GM12878 (cell line): ENCODE measurements at regions of chr10 and their contacts with region 1.

Region 1: DNA sequence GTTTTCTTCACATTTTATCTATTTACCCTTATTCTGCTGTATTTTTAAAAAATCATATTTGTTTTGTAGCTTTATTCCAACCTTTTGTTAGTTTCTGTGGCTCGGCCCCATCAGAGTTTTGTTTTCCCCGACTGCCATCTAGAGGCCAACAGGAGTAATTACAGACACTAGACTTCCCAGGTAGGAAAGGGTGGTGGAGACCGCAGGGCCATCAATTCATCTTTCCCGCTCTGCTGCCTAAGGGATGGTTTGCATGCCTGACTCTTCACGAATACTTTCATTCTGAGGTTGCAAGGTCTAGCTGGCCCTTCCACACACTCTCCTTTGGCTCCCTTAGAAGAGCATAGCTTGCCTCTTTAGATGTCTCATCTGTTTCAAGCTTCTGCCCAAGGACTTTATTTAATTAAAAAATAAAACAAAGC is 38.3 kb downstream of the LYZL2 start:
- DNase-seq: no peak
- ATAC-seq: peak; percentile 41
- H3K4me3 ChIP-seq: no peak overlapping the region
- H3K27ac ChIP-seq: no peak overlapping the region
- H3K4me1 ChIP-seq: peaks cover 16% of the 10 kb centered on the region
- H3K27me3 ChIP-seq: no peaks in the 10 kb centered on the region
- CTCF ChIP-seq: peak; percentile 66 to 78 (median 72)
- EP300 ChIP-seq: no peak
- POLR2A ChIP-seq: no peak
- RAD21 ChIP-seq: peak; percentile 95

Region 2: GRCh38 chr10:30348378-30348776 is 242.9 kb before region 1 on chr10:
- CTCF ChIA-PET with region 1: interaction called, 17 read pairs
- POLR2A ChIA-PET with region 1: interaction called, 3 read pairs
- RAD21 ChIA-PET with region 1: interaction called, 5 read pairs
- SMC1A ChIA-PET with region 1: interaction called, 5 read pairs
- in situ Hi-C with region 1: no loop called
- intact Hi-C with region 1: no loop called
- DNase-seq: peak; percentile 2
- ATAC-seq: peak; percentile 20
- H3K4me3 ChIP-seq: peak overlapping the region; percentile 89
- H3K27ac ChIP-seq: peak overlapping the region; percentile 92
- H3K4me1 ChIP-seq: peaks cover 3% of the 10 kb centered on the region; the same call in 1 of the 2 replicates
- H3K27me3 ChIP-seq: no peaks in the 10 kb centered on the region; a peak in 1 of 4 replicates
- CTCF ChIP-seq: no peak
- EP300 ChIP-seq: no peak
- POLR2A ChIP-seq: no peak
- RAD21 ChIP-seq: no peak

Region 3: GRCh38 chr10:30392564-30392990 is 198.7 kb before region 1 on chr10:
- CTCF ChIA-PET with region 1: interaction called, 221 read pairs
- POLR2A ChIA-PET with region 1: interaction called, 8 read pairs
- RAD21 ChIA-PET with region 1: interaction called, 59 read pairs
- SMC1A ChIA-PET with region 1: interaction called, 68 read pairs
- in situ Hi-C with region 1: loop called (anchors 5 kb)
- intact Hi-C with region 1: loop called (anchors 1 kb)
- DNase-seq: peak; percentile 31
- ATAC-seq: peak; percentile 100
- H3K4me3 ChIP-seq: no peak overlapping the region
- H3K27ac ChIP-seq: no peak overlapping the region
- H3K4me1 ChIP-seq: no peaks in the 10 kb centered on the region
- H3K27me3 ChIP-seq: no peaks in the 10 kb centered on the region
- CTCF ChIP-seq: peak; percentile 81 to 100 (median 97); a peak in 5 of 6 replicates
- EP300 ChIP-seq: no peak
- POLR2A ChIP-seq: no peak
- RAD21 ChIP-seq: peak; percentile 97

Region 4: DNA sequence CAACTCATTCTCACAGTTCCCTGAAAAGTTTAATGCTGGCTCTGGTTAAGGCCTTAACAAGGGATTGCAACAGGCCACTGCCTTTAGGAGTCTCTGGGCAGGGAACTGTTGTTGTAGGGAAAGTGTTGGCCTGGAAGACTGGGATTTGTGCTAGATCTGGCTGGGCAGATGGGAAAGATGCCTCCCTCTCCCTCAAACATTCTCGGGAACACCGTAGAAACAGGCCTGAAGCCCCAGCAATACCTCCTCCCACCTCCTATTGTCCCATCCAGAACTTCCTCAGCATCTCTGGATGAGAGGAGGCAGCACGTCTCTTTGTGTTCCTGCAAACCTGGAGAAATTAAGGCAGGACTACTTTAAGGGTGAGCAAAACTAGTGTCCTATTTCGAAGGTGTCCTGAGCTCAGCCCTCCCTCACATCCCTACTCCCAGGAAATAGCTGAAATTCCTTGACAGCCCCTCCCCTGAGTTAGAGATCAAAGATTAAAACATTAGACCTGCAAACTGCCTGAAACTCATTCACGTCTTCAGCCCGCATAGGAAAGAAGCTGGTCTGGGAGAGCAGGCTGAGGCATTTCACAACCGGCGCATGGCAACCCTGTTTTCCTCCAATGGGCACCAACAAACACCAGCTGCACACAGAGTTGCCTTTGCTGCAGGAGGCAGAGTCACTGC is 168.1 kb before region 1 on chr10:
- CTCF ChIA-PET with region 1: interaction called, 11 read pairs
- POLR2A ChIA-PET with region 1: no interaction called
- RAD21 ChIA-PET with region 1: interaction called, 3 read pairs
- SMC1A ChIA-PET with region 1: interaction called, 10 read pairs
- in situ Hi-C with region 1: no loop called
- intact Hi-C with region 1: no loop called
- DNase-seq: no peak
- ATAC-seq: no peak
- H3K4me3 ChIP-seq: no peak overlapping the region; the same call in 1 of the 2 replicates
- H3K27ac ChIP-seq: no peak overlapping the region; the same call in none of the 2 replicates
- H3K4me1 ChIP-seq: peaks cover 61% of the 10 kb centered on the region
- H3K27me3 ChIP-seq: no peaks in the 10 kb centered on the region
- CTCF ChIP-seq: no peak
- EP300 ChIP-seq: no peak
- POLR2A ChIP-seq: no peak
- RAD21 ChIP-seq: no peak

Region 5: GRCh38 chr10:30529373-30529998 is 61.8 kb before region 1 on chr10:
- CTCF ChIA-PET with region 1: interaction called, 49 read pairs
- POLR2A ChIA-PET with region 1: no interaction called
- RAD21 ChIA-PET with region 1: interaction called, 14 read pairs
- SMC1A ChIA-PET with region 1: interaction called, 15 read pairs
- in situ Hi-C with region 1: no loop called
- intact Hi-C with region 1: loop called (anchors 2 kb)
- DNase-seq: peak; percentile 77
- ATAC-seq: peak; percentile 87
- H3K4me3 ChIP-seq: peak overlapping the region; percentile 48
- H3K27ac ChIP-seq: peak overlapping the region; percentile 97
- H3K4me1 ChIP-seq: peaks cover 33% of the 10 kb centered on the region
- H3K27me3 ChIP-seq: no peaks in the 10 kb centered on the region
- CTCF ChIP-seq: no peak
- EP300 ChIP-seq: peak; percentile 97 to 99; a peak in 3 of 4 replicates
- POLR2A ChIP-seq: peak; percentile 88
- RAD21 ChIP-seq: 0 out of 2 replicates have a peak, but pooled peaks have one; percentile 11

Region 6: DNA sequence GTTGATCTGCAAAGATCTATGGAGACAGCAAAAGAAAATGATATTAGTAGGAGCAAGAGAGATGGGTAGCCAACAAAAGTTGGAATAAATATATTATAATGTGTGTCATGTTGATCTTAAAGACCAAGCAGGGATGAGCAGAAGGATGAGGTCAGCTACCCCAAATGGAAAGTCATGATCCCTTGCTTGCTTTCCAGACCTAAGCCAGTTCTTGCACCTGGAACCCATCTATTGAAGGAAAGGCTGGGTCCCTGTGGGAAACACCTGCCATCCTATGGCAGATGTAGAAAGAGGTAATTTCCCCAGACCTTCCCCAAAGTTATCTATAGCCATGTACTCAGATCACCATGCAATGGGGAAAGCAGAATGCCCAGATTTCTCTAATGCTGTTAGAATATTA is 14.2 kb before region 1 on chr10:
- CTCF ChIA-PET with region 1: interaction called, 127 read pairs
- POLR2A ChIA-PET with region 1: interaction called, 3 read pairs
- RAD21 ChIA-PET with region 1: interaction called, 41 read pairs
- SMC1A ChIA-PET with region 1: interaction called, 61 read pairs
- in situ Hi-C with region 1: no loop called
- intact Hi-C with region 1: no loop called
- DNase-seq: no peak
- ATAC-seq: no peak
- H3K4me3 ChIP-seq: no peak overlapping the region
- H3K27ac ChIP-seq: no peak overlapping the region
- H3K4me1 ChIP-seq: peaks cover 5% of the 10 kb centered on the region; the same call in 1 of the 2 replicates
- H3K27me3 ChIP-seq: no peaks in the 10 kb centered on the region
- CTCF ChIP-seq: no peak
- EP300 ChIP-seq: no peak
- POLR2A ChIP-seq: no peak
- RAD21 ChIP-seq: no peak